BJ (cell line): ENCODE measurements at regions of chr18 and their contacts with region 1.

Region 1: DNA sequence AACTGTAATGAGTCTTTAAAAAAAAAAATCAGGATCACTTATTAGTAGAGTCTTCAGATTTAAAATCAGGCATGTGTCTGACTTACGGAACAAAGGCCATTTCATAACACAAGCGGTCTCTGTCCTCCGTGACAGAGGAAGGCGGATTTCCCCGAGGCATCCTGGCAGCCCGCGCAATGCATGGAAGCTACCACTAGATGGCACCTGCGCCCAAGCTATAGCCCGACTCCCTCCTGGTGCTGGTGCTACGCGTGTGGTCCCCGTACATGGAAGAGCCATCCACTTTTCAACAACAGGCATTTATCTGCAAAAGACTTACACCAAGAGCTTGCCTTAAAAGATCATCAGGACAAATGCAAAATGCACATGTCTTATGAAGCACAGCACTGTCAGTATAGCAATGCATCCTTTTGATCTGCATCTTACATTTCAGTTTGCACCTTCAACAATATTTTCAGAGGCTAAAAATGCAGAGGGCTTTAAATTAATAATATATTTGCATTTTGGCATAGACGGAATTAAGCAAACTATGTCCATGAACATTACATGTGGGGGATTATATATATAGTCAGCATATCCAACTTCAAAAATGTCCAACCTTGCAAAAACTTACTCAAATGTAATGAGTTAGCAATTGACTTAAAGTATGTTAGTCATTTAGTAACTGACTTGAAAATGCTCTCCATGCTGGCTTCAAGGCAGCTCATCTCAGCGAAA is 96.0 kb downstream of the ZNF516 start:
- DNase-seq: no peak
- H3K4me3 ChIP-seq: no peak overlapping the region
- H3K27me3 ChIP-seq: no peaks in the 10 kb centered on the region
- CTCF ChIP-seq: peak; percentile 99

Region 2: GRCh38 chr18:76410660-76411417 is 11.8 kb after region 1 on chr18:
- CTCF ChIA-PET with region 1: interaction called, 28 read pairs
- POLR2A ChIA-PET with region 1: no interaction called
- DNase-seq: no peak
- H3K4me3 ChIP-seq: no peak overlapping the region
- H3K27me3 ChIP-seq: no peaks in the 10 kb centered on the region
- CTCF ChIP-seq: no peak

Region 3: GRCh38 chr18:76426737-76427305 is 27.8 kb after region 1 on chr18:
- CTCF ChIA-PET with region 1: interaction called, 10 read pairs
- POLR2A ChIA-PET with region 1: no interaction called
- DNase-seq: no peak
- H3K4me3 ChIP-seq: no peak overlapping the region
- H3K27me3 ChIP-seq: no peaks in the 10 kb centered on the region
- CTCF ChIP-seq: peak; percentile 92

Region 4: DNA sequence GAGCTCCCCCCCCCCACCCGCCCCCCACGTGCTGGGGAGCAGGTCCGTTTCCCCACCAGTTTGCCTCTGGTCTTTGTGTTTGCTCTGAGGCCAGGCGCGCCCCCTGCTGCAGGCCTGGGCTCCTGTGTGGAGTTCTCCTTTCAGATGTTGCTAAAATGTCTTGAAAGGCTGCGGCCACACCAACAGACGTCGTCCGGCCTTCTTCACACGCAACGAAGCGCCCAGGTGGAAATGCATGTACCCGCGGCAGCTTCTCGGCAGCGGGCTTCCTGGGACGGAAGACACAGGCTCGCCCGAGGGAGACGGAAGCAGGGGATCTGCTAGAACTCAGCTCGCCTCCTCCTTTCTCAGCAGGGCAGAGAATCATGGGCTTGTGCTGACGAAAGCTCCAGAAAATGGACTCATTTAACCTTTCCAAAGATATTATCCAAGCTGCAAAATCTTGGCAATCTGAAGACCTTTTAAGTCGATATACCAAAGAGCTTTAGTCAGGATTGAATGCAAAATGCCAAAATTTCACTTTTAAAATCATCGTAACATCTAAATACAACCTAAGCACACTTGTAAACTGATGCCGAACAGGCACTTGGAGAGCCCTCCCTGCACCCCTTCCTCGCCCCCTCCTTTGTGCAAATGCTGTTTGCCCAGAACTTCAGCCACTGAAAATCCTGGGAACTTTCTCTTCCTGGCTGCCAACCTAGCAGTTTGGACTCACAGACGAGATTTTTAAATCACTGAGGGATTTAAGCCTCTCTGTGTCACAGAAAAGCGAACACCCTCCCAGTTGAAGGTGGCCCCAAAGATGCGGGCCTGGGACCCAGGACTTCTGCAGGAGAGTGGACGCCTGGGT is 221.5 kb after region 1 on chr18:
- CTCF ChIA-PET with region 1: interaction called, 31 read pairs
- POLR2A ChIA-PET with region 1: no interaction called
- DNase-seq: no peak
- H3K4me3 ChIP-seq: peak overlapping the region; percentile 25; the same call in 1 of the 2 replicates
- H3K27me3 ChIP-seq: no peaks in the 10 kb centered on the region; the same call in 1 of the 2 replicates
- CTCF ChIP-seq: peak; percentile 85

Region 5: GRCh38 chr18:76686737-76687262 is 287.7 kb after region 1 on chr18:
- CTCF ChIA-PET with region 1: interaction called, 52 read pairs
- POLR2A ChIA-PET with region 1: no interaction called
- DNase-seq: no peak
- H3K4me3 ChIP-seq: no peak overlapping the region
- H3K27me3 ChIP-seq: peaks cover 9% of the 10 kb centered on the region
- CTCF ChIP-seq: peak; percentile 74